SK-N-SH (cell line): ENCODE measurements at regions of chr19 and their contacts with region 1.

Region 1: GRCh38 chr19:10332955-10333757 is at the start of gene RAVER1:
- DNase-seq: peak; percentile 99
- H3K4me3 ChIP-seq: peak within 1 kb of the TSS; percentile 81 to 95
- H3K27ac ChIP-seq: peak within 1 kb of the TSS; percentile 93 to 97
- H3K4me1 ChIP-seq: peaks cover 0 to 22% of the 10 kb centered on the region in 2 experiments; a peak in 1 of 4 replicates
- H3K27me3 ChIP-seq: no peaks in the 10 kb centered on the region
- CTCF ChIP-seq: no peak
- EP300 ChIP-seq: no peak
- RAD21 ChIP-seq: no peak
- polyA plus RNA-seq, gene RAVER1: 3.0 and 8.2 TPM in 2 replicates

Region 2: DNA sequence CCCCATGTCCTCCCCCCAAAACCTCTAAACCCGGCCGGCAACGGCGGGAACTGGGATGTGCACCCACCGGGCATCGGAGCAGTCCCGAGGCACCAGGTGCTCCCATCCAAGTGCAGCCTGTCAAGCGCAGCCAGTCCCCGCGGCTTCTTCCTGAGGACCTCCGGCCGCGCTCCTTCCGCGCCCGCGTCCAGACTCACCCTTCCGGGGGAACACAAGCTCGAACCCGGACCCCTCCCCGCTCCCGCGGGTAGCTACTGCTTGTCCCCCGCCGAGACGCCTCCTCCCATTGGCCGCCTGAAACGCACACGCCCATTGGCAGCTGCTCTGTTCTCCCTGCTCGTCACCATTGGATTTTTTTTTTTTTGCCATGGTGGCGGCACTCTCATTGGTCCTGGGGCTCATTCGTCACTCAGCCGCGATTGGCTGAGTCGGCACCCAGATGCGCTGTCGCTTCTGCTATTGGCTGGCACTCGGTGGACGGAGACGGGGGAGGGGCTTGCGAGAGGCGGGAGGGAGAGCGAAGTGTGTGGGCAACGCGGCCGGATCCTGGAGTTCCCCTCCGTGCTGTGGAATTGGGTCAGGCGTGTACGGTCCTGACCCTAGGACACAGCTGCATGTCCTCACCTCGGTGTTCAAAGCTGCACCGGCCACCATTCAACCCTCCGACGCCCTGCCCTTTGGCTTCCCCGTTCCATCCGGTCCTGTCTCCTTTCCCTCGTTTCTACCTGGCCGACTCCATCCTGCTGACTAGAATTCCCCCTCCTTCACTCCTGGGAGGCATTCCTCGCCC is 47.4 kb after region 1 on chr19 and contains the start of gene TYK2:
- CTCF ChIA-PET with region 1: interaction called, 3 read pairs
- POLR2A ChIA-PET with region 1: interaction called, 15 read pairs
- DNase-seq: peak; percentile 100
- H3K4me3 ChIP-seq: peak within 1 kb of the TSS; percentile 78 to 83
- H3K27ac ChIP-seq: peak within 1 kb of the TSS; percentile 39 to 67; a peak in 3 of 4 replicates
- H3K4me1 ChIP-seq: peaks cover 0 to 9% of the 10 kb centered on the region in 2 experiments; a peak in 1 of 4 replicates
- H3K27me3 ChIP-seq: no peaks in the 10 kb centered on the region
- CTCF ChIP-seq: no peak
- EP300 ChIP-seq: peak in 1 of 2 experiments; percentile 5; a peak in 1 of 4 replicates
- RAD21 ChIP-seq: no peak
- polyA plus RNA-seq, gene TYK2: 34.8 and 44.6 TPM in 2 replicates